Naive thymus-derived CD4-positive, alpha-beta T cell (primary cell): ENCODE measurements at regions of chr17 and their contacts with region 1.

Region 1: GRCh38 chr17:43170766-43171585 is at the start of gene NBR1:
- DNase-seq: peak; percentile 78 to 98 (median 97)
- ATAC-seq: peak; percentile 85
- H3K4me3 ChIP-seq: peak within 1 kb of the TSS; percentile 64
- H3K4me3 Mint-ChIP-seq: no peak within 1 kb of the TSS
- H3K27ac ChIP-seq: peak within 1 kb of the TSS; percentile 97
- H3K27ac Mint-ChIP-seq: no peak within 1 kb of the TSS
- H3K4me1 ChIP-seq: peaks cover 30 to 33% of the 10 kb centered on the region in 2 donors
- H3K4me1 Mint-ChIP-seq: peaks cover 21 to 46% (median 32%) of the 10 kb centered on the region in 7 donors
- H3K27me3 ChIP-seq: no peaks in the 10 kb centered on the region
- H3K27me3 Mint-ChIP-seq: no peaks in the 10 kb centered on the region
- total RNA-seq, gene NBR1: 44.6 to 83.0 (median 64.3) TPM

Region 2: DNA sequence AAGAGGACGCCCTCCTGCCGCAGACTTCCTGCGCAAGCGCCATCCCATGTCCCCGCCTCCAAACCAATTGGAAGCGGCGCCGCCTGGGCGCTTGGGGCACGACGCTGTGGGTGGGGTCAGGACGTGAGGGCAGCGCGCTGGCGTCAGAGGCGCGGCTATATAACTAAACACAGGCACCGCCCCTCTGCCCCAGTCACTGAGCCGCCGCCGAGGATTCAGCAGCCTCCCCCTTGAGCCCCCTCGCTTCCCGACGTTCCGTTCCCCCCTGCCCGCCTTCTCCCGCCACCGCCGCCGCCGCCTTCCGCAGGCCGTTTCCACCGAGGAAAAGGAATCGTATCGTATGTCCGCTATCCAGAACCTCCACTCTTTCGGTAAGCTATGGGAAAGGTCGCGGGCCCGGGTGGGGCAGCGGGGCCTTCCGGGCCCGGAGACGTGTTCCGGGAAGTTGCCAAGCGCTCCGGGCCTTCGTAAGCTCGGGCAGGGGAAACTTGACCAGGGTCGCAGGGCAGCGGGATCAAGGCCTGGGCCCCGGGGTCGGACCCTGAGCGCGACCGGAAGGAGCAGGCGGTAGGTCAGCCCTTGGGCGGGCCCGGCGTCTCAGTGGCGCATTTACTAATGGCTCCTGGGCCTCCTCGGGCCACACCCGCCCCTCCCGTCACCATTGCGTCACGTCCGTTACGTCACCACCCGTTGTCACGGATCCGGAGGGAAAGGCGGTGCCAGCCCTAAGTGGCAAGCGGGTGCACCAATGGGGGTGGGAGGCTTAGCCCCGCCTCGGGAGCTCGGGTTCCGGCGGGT is 1482.1 kb before region 1 on chr17 and contains the start of gene EIF1:
- CTCF ChIA-PET with region 1: no interaction called
- POLR2A ChIA-PET with region 1: interaction called, 3 read pairs
- intact Hi-C with region 1: loop called in 1 of 2 experiments (anchors 2 kb)
- DNase-seq: peak; percentile 98 to 100 (median 99)
- ATAC-seq: peak; percentile 85
- H3K4me3 ChIP-seq: peak within 1 kb of the TSS; percentile 86
- H3K4me3 Mint-ChIP-seq: peak within 1 kb of the TSS; percentile 90 to 99 (median 96)
- H3K27ac ChIP-seq: peak within 1 kb of the TSS; percentile 99
- H3K27ac Mint-ChIP-seq: peak within 1 kb of the TSS; percentile 98 to 99 (median 99)
- H3K4me1 ChIP-seq: peaks cover 22 to 25% of the 10 kb centered on the region in 2 donors
- H3K4me1 Mint-ChIP-seq: peaks cover 13 to 43% (median 35%) of the 10 kb centered on the region in 7 donors
- H3K27me3 ChIP-seq: no peaks in the 10 kb centered on the region
- H3K27me3 Mint-ChIP-seq: peaks cover 0 to 9% (median 0%) of the 10 kb centered on the region in 5 donors
- total RNA-seq, gene EIF1: 710 to 2,222 (median 934) TPM

Region 3: DNA sequence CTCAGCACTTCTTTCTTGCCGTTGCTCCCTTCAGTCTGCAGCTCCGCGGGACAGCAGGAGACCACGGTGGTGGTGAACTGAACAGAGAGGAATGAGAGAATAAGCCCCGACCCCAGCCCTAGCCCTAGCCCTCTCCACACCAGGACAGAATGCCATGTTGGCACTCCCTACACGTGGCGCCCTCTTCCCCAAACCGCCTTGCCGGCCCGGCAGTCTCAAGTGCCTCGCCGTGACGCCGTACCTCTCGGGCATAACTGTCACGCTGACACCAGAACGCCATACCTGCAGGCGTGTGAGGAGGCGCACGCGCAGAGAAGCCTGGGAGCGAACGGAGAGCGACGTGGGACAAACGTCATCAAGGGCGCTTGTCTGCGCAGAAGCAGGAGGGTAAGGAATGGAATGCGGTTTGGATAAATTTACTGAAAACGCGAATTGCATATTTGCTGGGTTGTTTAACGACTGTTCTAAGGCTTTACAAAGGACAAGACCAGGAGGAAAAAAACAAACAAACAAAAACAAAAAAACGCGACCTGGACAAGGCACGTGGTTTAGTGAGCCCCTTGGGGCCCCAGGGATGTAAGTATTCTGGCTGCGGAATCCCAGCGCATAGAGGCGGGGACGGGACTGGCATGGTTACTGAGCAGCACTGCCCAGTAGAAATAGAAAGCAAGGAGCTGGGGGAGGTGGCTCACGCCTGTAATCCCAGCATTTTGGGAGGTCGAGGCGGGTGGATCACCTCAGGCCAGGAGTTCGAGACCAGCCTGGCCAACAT is 206.6 kb before region 1 on chr17 and contains the start of gene AARSD1:
- CTCF ChIA-PET with region 1: no interaction called
- POLR2A ChIA-PET with region 1: no interaction called
- intact Hi-C with region 1: loop called (anchors 1 kb)
- DNase-seq: peak; percentile 77 to 92 (median 90)
- ATAC-seq: peak; percentile 99
- H3K4me3 ChIP-seq: peak within 1 kb of the TSS; percentile 96
- H3K4me3 Mint-ChIP-seq: peak within 1 kb of the TSS; percentile 89 to 99 (median 94)
- H3K27ac ChIP-seq: peak within 1 kb of the TSS; percentile 77
- H3K27ac Mint-ChIP-seq: peak within 1 kb of the TSS; percentile 86 to 97 (median 94)
- H3K4me1 ChIP-seq: peaks cover 5 to 10% of the 10 kb centered on the region in 2 donors
- H3K4me1 Mint-ChIP-seq: peaks cover 11 to 23% (median 18%) of the 10 kb centered on the region in 7 donors
- H3K27me3 ChIP-seq: no peaks in the 10 kb centered on the region
- H3K27me3 Mint-ChIP-seq: peaks cover 0 to 2% (median 0%) of the 10 kb centered on the region in 5 donors
- total RNA-seq, gene AARSD1: 46.5 to 86.7 (median 56.6) TPM

Region 4: DNA sequence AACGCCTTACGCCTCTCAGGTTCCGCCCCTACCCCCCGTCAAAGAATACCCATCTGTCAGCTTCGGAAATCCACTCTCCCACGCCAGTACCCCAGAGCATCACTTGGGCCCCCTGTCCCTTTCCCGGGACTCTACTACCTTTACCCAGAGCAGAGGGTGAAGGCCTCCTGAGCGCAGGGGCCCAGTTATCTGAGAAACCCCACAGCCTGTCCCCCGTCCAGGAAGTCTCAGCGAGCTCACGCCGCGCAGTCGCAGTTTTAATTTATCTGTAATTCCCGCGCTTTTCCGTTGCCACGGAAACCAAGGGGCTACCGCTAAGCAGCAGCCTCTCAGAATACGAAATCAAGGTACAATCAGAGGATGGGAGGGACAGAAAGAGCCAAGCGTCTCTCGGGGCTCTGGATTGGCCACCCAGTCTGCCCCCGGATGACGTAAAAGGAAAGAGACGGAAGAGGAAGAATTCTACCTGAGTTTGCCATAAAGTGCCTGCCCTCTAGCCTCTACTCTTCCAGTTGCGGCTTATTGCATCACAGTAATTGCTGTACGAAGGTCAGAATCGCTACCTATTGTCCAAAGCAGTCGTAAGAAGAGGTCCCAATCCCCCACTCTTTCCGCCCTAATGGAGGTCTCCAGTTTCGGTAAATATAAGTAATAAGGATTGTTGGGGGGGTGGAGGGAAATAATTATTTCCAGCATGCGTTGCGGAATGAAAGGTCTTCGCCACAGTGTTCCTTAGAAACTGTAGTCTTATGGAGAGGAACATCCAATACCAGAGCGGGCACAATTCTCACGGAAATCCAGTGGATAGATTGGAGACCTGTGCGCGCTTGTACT is 45.6 kb before region 1 on chr17 and contains the start of gene BRCA1:
- CTCF ChIA-PET with region 1: no interaction called
- POLR2A ChIA-PET with region 1: interaction called, 9 read pairs
- intact Hi-C with region 1: loop called (anchors 1 kb)
- DNase-seq: peak; percentile 78 to 98 (median 96)
- ATAC-seq: peak; percentile 100
- H3K4me3 ChIP-seq: peak within 1 kb of the TSS; percentile 83
- H3K4me3 Mint-ChIP-seq: peak within 1 kb of the TSS; percentile 88 to 97 (median 94)
- H3K27ac ChIP-seq: peak within 1 kb of the TSS; percentile 83
- H3K27ac Mint-ChIP-seq: peak within 1 kb of the TSS; percentile 88 to 98 (median 93)
- H3K4me1 ChIP-seq: peaks cover 6 to 8% of the 10 kb centered on the region in 2 donors
- H3K4me1 Mint-ChIP-seq: peaks cover 14 to 39% (median 30%) of the 10 kb centered on the region in 7 donors
- H3K27me3 ChIP-seq: no peaks in the 10 kb centered on the region
- H3K27me3 Mint-ChIP-seq: no peaks in the 10 kb centered on the region
- total RNA-seq, gene BRCA1: 2.6 to 54.1 (median 5.4) TPM

Region 5: DNA sequence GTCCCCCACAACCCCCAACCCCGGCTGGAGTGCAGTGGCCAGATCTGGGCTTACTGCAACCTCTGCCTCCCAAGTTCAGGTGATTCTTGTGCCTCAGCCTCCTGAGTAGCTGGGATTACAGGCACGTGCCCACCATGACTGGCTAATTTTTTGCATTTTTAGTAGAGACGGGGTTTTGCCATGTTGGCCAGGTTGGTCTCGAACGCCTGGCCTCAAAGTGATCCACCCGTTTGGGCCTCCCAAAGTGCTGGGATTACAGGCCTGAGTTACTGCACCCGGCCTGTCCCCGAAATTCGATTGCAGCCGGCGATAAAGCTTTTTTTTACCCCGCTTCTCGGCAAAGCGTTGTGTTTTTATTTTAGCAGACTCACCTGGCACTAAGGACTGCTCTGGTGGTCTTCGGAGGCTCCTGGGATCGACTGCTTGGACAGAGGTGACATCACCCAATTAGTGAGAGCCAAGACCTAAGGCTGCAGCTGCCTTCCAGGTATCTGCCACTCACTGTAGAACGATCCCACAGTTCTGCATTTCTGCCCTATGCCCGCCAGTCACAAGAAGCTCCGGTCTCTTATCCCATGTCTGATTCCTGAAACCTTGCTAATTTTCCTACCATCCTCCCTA is 145.7 kb after region 1 on chr17:
- CTCF ChIA-PET with region 1: interaction called, 3 read pairs
- POLR2A ChIA-PET with region 1: interaction called, 15 read pairs
- intact Hi-C with region 1: loop called (anchors 1 kb)
- DNase-seq: peak in 2 of 9 donors; percentile 13 to 36
- ATAC-seq: no peak
- H3K4me3 ChIP-seq: no peak overlapping the region
- H3K4me3 Mint-ChIP-seq: peak overlapping the region in 5 of 10 donors; percentile 16 to 42 (median 25)
- H3K27ac ChIP-seq: no peak overlapping the region
- H3K27ac Mint-ChIP-seq: peak overlapping the region in 7 of 9 donors; percentile 38 to 79 (median 63)
- H3K4me1 ChIP-seq: no peaks in the 10 kb centered on the region
- H3K4me1 Mint-ChIP-seq: peaks cover 5 to 11% (median 7%) of the 10 kb centered on the region in 7 donors
- H3K27me3 ChIP-seq: no peaks in the 10 kb centered on the region
- H3K27me3 Mint-ChIP-seq: no peaks in the 10 kb centered on the region

Region 6: DNA sequence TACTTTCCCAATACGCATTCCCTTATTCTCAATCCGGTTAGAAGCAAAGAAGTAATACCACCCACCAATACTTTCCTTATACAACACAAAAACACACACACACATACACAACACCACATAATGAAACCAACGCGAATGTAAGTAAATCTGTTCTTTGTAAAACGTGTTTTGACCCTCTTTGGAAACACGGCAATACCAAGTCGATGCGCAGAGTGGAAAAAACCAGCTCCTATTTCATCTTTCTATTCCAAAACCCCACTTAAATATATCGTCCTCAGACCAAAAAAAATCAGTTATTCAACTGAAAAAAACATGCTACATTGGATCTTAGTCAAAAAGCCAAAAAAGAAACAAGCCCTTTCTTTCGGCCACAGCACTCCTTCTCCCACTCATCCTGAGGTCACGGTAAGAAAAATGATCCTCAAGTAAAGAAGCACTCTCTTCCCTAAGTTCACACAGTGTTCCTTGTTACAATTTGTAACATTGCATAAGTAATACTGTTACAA is 196.8 kb after region 1 on chr17:
- CTCF ChIA-PET with region 1: no interaction called
- POLR2A ChIA-PET with region 1: interaction called, 8 read pairs
- intact Hi-C with region 1: loop called (anchors 2 kb)
- DNase-seq: peak in 4 of 9 donors; percentile 31 to 80 (median 70)
- ATAC-seq: peak; percentile 72
- H3K4me3 ChIP-seq: peak overlapping the region; percentile 75
- H3K4me3 Mint-ChIP-seq: peak overlapping the region; percentile 85 to 99 (median 92)
- H3K27ac ChIP-seq: peak overlapping the region; percentile 93
- H3K27ac Mint-ChIP-seq: peak overlapping the region; percentile 99 to 100 (median 100)
- H3K4me1 ChIP-seq: peaks cover 8 to 19% of the 10 kb centered on the region in 2 donors
- H3K4me1 Mint-ChIP-seq: peaks cover 31 to 65% (median 59%) of the 10 kb centered on the region in 7 donors
- H3K27me3 ChIP-seq: no peaks in the 10 kb centered on the region
- H3K27me3 Mint-ChIP-seq: no peaks in the 10 kb centered on the region

Region 7: DNA sequence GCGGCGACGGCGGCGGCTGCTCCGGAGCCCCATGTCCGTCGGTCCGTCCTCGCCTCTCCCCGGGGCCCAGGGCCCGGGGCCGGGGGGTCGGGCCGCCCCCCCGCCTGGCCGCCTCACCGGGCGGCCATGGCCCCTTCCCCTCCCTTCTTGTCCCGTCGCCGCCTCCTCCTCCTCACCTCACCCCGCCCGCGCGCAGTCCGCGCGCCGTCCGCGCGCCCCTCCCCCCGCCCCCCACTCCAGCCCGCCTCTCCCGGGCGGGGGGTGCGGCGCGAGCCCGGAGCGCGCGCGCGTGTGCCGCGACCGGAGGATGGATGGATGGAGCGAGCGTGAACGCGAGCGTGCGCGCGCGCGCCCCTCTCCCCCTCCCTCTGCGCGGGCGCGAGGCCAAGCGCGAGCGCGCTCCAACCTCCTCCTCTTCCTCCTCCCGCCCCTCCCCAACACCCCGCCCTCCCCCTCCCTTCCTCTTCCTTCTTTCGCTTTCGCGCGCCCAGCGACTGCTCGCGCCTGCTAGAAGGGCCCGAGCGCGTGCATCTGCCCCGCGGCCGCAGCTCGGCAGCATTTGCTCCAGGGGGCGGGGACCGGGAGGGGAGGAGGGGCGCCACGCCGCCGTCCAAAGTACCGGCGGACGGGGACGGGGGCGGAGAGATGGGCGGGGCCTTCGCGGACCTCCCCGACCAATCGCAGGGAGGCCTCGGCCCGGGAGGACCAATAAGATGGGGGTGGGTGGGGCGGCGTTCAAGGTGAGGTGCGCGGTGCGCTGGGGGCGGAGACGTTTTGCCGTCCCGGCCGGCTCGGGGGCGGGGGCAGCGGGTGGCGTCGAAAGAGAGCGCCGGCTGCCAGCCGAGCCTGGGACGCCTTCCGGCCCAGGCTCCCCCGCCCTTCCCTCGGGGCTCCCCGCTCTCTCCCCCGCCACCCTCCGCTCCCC is 1028.8 kb after region 1 on chr17 and contains the start of gene ATXN7L3:
- CTCF ChIA-PET with region 1: no interaction called
- POLR2A ChIA-PET with region 1: no interaction called
- intact Hi-C with region 1: loop called in 1 of 2 experiments (anchors 5 kb)
- DNase-seq: peak; percentile 90 to 99 (median 98)
- ATAC-seq: peak; percentile 91
- H3K4me3 ChIP-seq: peak within 1 kb of the TSS; percentile 68
- H3K4me3 Mint-ChIP-seq: peak within 1 kb of the TSS; percentile 90 to 97 (median 92)
- H3K27ac ChIP-seq: peak within 1 kb of the TSS; percentile 93
- H3K27ac Mint-ChIP-seq: peak within 1 kb of the TSS; percentile 91 to 97 (median 96)
- H3K4me1 ChIP-seq: peaks cover 27 to 34% of the 10 kb centered on the region in 2 donors
- H3K4me1 Mint-ChIP-seq: peaks cover 39 to 61% (median 53%) of the 10 kb centered on the region in 7 donors
- H3K27me3 ChIP-seq: no peaks in the 10 kb centered on the region
- H3K27me3 Mint-ChIP-seq: no peaks in the 10 kb centered on the region
- total RNA-seq, gene ATXN7L3: 93.5 to 130 (median 124) TPM